Activated CD8-positive, alpha-beta T cell treated with anti-CD3 and anti-CD28 coated beads, Interleukin-2, amount 10 ng/mL, durations not matched to agents 7 days and 5 days (primary cell): ENCODE measurements at regions of chr12 and their contacts with region 1.

Region 1: GRCh38 chr12:56020423-56021184 is at the start of gene IKZF4:
- DNase-seq: peak; percentile 42
- ATAC-seq: peak; percentile 37
- H3K4me3 Mint-ChIP-seq: peak within 1 kb of the TSS; percentile 88
- H3K27ac Mint-ChIP-seq: peak within 1 kb of the TSS; percentile 96
- H3K4me1 Mint-ChIP-seq: peaks cover 53% of the 10 kb centered on the region
- H3K27me3 Mint-ChIP-seq: no peaks in the 10 kb centered on the region
- total RNA-seq, gene IKZF4: 19.9 to 20.7 TPM

Region 2: GRCh38 chr12:56007564-56008559 is 12.7 kb before region 1 on chr12:
- CTCF ChIA-PET with region 1: interaction called, 6 read pairs
- POLR2A ChIA-PET with region 1: interaction called, 26 read pairs
- DNase-seq: peak; percentile 71
- ATAC-seq: peak; percentile 87
- H3K4me3 Mint-ChIP-seq: peak overlapping the region; percentile 82
- H3K27ac Mint-ChIP-seq: peak overlapping the region; percentile 86
- H3K4me1 Mint-ChIP-seq: peaks cover 29% of the 10 kb centered on the region
- H3K27me3 Mint-ChIP-seq: no peaks in the 10 kb centered on the region